ENCODE measurements at regions of chr7 and their contacts with region 1.

Region 1: DNA sequence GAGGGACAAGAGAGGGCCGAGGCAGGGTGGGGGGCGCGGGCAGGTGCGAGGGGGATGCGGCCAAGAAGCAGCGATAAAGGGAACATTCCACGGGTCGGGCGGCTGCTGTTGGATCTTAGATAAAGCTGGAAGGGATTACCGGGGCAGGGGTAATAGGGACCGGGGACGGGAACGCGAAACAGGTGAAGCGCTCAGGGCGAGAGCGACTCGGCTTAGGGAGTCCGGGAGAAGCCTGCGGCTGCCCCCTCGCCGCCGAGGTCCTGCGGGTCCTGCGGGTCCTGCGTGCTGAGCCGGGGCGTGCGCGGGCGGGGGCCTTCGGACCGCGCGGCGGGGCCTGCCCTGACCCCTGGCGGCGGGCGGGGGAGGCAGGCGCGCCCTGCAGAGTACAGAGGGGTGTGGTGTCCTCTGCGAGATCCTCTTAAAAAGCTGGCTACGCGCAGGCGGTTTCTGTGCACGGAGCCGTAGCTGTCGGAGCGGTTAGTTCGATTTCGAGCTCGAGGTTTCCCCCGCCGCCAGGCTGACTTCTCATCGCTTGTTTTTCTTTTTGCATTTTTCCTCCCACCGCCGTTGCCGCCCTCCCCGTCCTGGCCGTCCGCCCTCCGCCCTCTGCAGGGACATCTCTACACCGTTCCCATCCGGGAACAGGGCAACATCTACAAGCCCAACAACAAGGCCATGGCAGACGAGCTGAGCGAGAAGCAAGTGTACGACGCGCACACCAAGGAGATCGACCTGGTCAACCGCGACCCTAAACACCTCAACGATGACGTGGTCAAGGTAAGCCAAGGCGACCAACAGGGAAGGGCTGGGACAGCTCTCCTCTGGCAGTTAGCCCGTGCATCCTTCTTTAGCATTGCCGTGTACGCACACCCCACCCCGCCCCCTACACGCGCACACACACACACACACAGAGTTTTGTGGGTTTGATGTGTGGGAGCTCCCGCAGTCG is 1.4 kb downstream of the CAV1 start:
- DNase-seq: peak; percentile 88
- ATAC-seq: peak; percentile 69
- H3K4me3 ChIP-seq: peak overlapping the region; percentile 72
- H3K27ac ChIP-seq: peak overlapping the region; percentile 97
- H3K4me1 ChIP-seq: peaks cover 11% of the 10 kb centered on the region
- H3K27me3 ChIP-seq: no peaks in the 10 kb centered on the region
- CTCF ChIP-seq: peak; percentile 87
- POLR2A ChIP-seq: peak; percentile 73
- RAD21 ChIP-seq: peak; percentile 78

Region 2: DNA sequence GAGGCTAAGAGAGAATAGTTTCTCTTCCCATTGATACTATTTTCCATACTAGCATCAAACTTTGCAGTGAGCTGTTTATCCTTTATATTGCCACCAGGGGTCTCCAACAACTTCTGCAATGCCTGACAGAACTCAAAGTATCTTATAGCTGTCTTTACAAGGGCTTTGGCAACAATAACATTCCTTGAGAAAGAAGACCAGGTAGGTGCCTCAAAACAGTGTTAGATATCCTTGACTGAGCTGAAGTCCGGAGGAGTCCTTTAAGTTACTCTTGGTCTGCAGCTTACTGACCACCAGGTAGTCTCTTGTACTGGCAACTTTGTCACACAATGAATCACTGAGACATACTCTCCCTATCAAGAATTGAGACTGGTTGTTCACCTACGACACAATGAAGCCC is 345.9 kb before region 1 on chr7:
- CTCF ChIA-PET with region 1: interaction called, 3 read pairs
- POLR2A ChIA-PET with region 1: no interaction called
- dilution Hi-C with region 1: no loop called
- in situ Hi-C with region 1: loop called (anchors 10 kb)
- intact Hi-C with region 1: loop called (anchors 2 kb)
- DNase-seq: peak; percentile 68
- ATAC-seq: peak; percentile 62
- H3K4me3 ChIP-seq: no peak overlapping the region
- H3K27ac ChIP-seq: no peak overlapping the region
- H3K4me1 ChIP-seq: peaks cover 3% of the 10 kb centered on the region
- H3K27me3 ChIP-seq: no peaks in the 10 kb centered on the region
- CTCF ChIP-seq: peak; percentile 82
- POLR2A ChIP-seq: no peak
- RAD21 ChIP-seq: peak; percentile 82

Region 3: GRCh38 chr7:116354546-116355408 is 171.4 kb before region 1 on chr7:
- CTCF ChIA-PET with region 1: interaction called, 4 read pairs
- POLR2A ChIA-PET with region 1: interaction called, 6 read pairs
- dilution Hi-C with region 1: no loop called
- in situ Hi-C with region 1: no loop called
- intact Hi-C with region 1: loop called (anchors 1 kb)
- DNase-seq: peak; percentile 98
- ATAC-seq: peak; percentile 92
- H3K4me3 ChIP-seq: peak overlapping the region; percentile 0; the same call in 1 of the 2 replicates
- H3K27ac ChIP-seq: peak overlapping the region; percentile 69
- H3K4me1 ChIP-seq: peaks cover 24% of the 10 kb centered on the region
- H3K27me3 ChIP-seq: no peaks in the 10 kb centered on the region
- CTCF ChIP-seq: no peak
- POLR2A ChIP-seq: peak; percentile 41; the same call in 1 of the 2 replicates
- RAD21 ChIP-seq: peak; percentile 34

Region 4: DNA sequence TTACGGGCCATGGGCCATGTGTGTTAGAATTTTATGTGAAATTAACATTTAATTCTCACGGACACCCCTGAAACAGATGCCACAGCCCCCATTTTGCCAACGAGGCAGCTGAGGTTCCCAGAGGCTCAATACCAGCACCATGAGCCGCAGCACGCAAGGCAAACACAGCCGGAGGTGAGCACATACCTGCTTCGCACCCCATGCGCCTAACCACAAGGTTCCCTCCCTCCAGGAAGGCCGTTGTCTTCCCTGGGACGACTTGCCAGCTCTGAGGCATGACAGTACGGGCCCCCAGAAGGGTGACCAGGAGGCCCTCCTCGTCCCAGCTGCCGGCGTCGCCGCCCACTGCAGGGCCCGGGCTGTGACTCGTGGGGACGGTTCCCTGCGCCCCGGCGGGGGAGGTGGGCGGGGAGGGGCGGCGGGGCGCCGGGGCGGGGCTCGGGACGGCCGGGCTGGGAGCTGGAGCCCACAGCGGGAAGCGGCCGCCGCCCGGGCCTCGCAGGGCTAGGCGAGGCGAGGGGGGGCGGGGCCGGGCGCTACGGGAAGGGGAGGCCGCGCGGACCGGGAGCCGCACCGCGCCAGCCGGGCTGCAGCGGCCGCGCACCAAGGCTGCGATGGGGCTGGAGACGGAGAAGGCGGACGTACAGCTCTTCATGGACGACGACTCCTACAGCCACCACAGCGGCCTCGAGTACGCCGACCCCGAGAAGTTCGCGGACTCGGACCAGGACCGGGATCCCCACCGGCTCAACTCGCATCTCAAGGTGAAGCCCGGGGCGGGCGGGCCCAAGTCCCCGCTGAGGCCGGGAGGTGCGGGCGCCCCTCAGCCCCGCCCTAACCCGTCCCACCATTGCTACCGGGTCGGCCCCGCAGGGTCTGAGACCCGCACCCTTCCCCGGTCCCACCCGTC is 26.8 kb before region 1 on chr7 and contains the start of gene CAV2:
- CTCF ChIA-PET with region 1: interaction called, 9 read pairs
- POLR2A ChIA-PET with region 1: interaction called, 3 read pairs
- dilution Hi-C with region 1: no loop called
- in situ Hi-C with region 1: no loop called
- intact Hi-C with region 1: loop called (anchors 2 kb)
- DNase-seq: peak; percentile 48
- ATAC-seq: peak; percentile 91
- H3K4me3 ChIP-seq: peak within 1 kb of the TSS; percentile 88
- H3K27ac ChIP-seq: peak within 1 kb of the TSS; percentile 94
- H3K4me1 ChIP-seq: peaks cover 15% of the 10 kb centered on the region
- H3K27me3 ChIP-seq: no peaks in the 10 kb centered on the region
- CTCF ChIP-seq: no peak
- POLR2A ChIP-seq: no peak; the same call in 1 of the 2 replicates
- RAD21 ChIP-seq: no peak
- total RNA-seq, gene CAV2: 199 and 217 TPM in 2 replicates

Region 5: GRCh38 chr7:116588641-116589594 is 62.7 kb after region 1 on chr7:
- CTCF ChIA-PET with region 1: interaction called, 12 read pairs
- POLR2A ChIA-PET with region 1: no interaction called
- dilution Hi-C with region 1: no loop called
- in situ Hi-C with region 1: loop called (anchors 10 kb)
- intact Hi-C with region 1: loop called (anchors 1 kb)
- DNase-seq: peak; percentile 81
- ATAC-seq: peak; percentile 60
- H3K4me3 ChIP-seq: no peak overlapping the region
- H3K27ac ChIP-seq: peak overlapping the region; percentile 80
- H3K4me1 ChIP-seq: peaks cover 9% of the 10 kb centered on the region
- H3K27me3 ChIP-seq: no peaks in the 10 kb centered on the region
- CTCF ChIP-seq: peak; percentile 78
- POLR2A ChIP-seq: 0 out of 2 replicates have a peak, but pooled peaks have one; percentile 17
- RAD21 ChIP-seq: peak; percentile 87

Region 6: GRCh38 chr7:117564080-117564479 is 1037.9 kb after region 1 on chr7:
- CTCF ChIA-PET with region 1: no interaction called
- POLR2A ChIA-PET with region 1: no interaction called
- dilution Hi-C with region 1: no loop called
- in situ Hi-C with region 1: no loop called
- intact Hi-C with region 1: no loop called
- DNase-seq: no peak
- ATAC-seq: no peak
- H3K4me3 ChIP-seq: no peak overlapping the region
- H3K27ac ChIP-seq: no peak overlapping the region
- H3K4me1 ChIP-seq: no peaks in the 10 kb centered on the region
- H3K27me3 ChIP-seq: no peaks in the 10 kb centered on the region
- CTCF ChIP-seq: no peak
- POLR2A ChIP-seq: no peak
- RAD21 ChIP-seq: no peak

Measured in IMR-90 (cell line).